ENCODE measurements at regions of chr19 and their contacts with region 1.

Region 1: GRCh38 chr19:8355631-8356402 is 8.1 kb upstream of the ANGPTL4 start:
- DNase-seq: peak; percentile 31 to 92
- H3K4me3 ChIP-seq: no peak overlapping the region
- H3K27ac ChIP-seq: peak overlapping the region; percentile 53
- H3K4me1 ChIP-seq: peaks cover 0 to 20% of the 10 kb centered on the region in 2 donors
- H3K27me3 ChIP-seq: no peaks in the 10 kb centered on the region
- CTCF ChIP-seq: no peak

Region 2: DNA sequence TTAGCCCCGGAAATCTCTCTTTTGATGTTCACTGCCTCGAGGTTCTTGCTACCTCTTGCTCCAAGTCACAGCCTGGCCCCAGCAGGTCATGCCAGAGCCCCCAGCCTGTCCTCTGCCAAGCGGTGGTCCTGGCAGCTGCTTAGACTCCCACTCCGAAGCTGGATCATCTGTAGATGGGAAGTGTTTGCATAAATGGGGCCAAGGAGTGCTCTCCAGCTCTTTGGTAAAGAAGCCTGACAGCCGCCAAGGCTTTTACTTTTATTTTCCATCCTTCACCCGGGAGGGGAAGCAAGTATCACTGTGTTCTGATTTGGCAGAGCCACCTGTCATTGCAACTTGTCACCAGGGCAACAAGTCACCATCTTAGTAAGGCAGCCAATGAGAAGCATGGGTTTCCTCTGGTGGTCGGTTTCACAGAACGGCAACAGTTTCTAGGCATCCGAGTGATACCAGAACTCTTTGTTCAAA is 697.6 kb before region 1 on chr19:
- intact Hi-C with region 1: no loop called
- DNase-seq: no peak
- H3K4me3 ChIP-seq: no peak overlapping the region
- H3K27ac ChIP-seq: no peak overlapping the region
- H3K4me1 ChIP-seq: no peaks in the 10 kb centered on the region
- H3K27me3 ChIP-seq: no peaks in the 10 kb centered on the region
- CTCF ChIP-seq: no peak

Region 3: DNA sequence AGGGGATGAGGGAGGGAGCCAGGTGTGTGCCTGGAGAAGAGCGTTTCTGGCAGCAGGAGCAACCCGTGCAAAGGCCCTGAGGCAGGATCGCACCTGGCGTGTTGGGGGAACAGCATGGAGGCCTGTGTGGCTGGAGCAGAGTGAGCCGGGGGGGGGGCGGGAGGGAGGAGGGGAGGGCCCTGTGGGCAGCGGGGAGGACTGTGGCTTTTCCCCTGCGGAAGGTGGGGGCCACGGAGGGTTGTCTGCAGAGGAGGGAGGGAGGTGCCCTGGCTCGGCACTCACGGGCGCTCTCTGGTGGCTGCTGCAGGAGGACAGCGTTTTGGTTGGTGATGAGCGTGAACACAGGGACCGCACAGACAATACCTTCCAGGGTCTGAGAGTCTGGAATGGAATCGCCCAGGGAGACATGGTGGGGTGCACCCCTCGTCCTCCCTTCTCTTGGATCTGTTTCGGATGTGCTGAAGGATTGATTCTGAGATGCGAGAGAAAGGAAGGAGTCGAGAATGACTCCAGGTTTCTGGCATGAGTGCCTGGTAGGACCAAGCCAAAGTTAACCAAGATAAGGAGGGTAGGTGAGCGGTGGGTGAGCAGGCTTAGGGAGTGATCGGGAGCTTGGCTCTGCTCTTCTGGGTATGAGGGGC is 40.9 kb after region 1 on chr19:
- intact Hi-C with region 1: loop called (anchors 1 kb)
- DNase-seq: no peak
- H3K4me3 ChIP-seq: no peak overlapping the region
- H3K27ac ChIP-seq: peak overlapping the region in 1 of 2 donors; percentile 29
- H3K4me1 ChIP-seq: peaks cover 11 to 39% of the 10 kb centered on the region in 2 donors
- H3K27me3 ChIP-seq: no peaks in the 10 kb centered on the region
- CTCF ChIP-seq: peak; percentile 40 to 71 (median 69)

Region 4: GRCh38 chr19:8505680-8506401 is 150.0 kb after region 1 on chr19:
- intact Hi-C with region 1: loop called (anchors 2 kb)
- DNase-seq: peak in 1 of 2 donors; percentile 87
- H3K4me3 ChIP-seq: peak overlapping the region; percentile 61 to 80
- H3K27ac ChIP-seq: no peak overlapping the region
- H3K4me1 ChIP-seq: peaks cover 7 to 10% of the 10 kb centered on the region in 2 donors
- H3K27me3 ChIP-seq: no peaks in the 10 kb centered on the region
- CTCF ChIP-seq: peak; percentile 73 to 91 (median 80)

Region 5: GRCh38 chr19:8580710-8581281 is 225.0 kb after region 1 on chr19:
- intact Hi-C with region 1: loop called (anchors 10 kb)
- DNase-seq: peak; percentile 44 to 92
- H3K4me3 ChIP-seq: no peak overlapping the region
- H3K27ac ChIP-seq: no peak overlapping the region
- H3K4me1 ChIP-seq: no peaks in the 10 kb centered on the region
- H3K27me3 ChIP-seq: no peaks in the 10 kb centered on the region
- CTCF ChIP-seq: peak; percentile 99 to 100 (median 100)